Activated CD8-positive, alpha-beta T cell treated with anti-CD3 and anti-CD28 coated beads, Interleukin-2, amount 10 ng/mL, durations not matched to agents 7 days and 5 days (primary cell): ENCODE measurements at regions of chr11 and their contacts with region 1.

Region 1: GRCh38 chr11:124793466-124794278 is 6.5 kb downstream of the MSANTD2 start:
- DNase-seq: peak; percentile 44
- ATAC-seq: peak; percentile 64
- H3K4me3 Mint-ChIP-seq: no peak overlapping the region
- H3K27ac Mint-ChIP-seq: no peak overlapping the region
- H3K4me1 Mint-ChIP-seq: peaks cover 34% of the 10 kb centered on the region
- H3K27me3 Mint-ChIP-seq: no peaks in the 10 kb centered on the region

Region 2: DNA sequence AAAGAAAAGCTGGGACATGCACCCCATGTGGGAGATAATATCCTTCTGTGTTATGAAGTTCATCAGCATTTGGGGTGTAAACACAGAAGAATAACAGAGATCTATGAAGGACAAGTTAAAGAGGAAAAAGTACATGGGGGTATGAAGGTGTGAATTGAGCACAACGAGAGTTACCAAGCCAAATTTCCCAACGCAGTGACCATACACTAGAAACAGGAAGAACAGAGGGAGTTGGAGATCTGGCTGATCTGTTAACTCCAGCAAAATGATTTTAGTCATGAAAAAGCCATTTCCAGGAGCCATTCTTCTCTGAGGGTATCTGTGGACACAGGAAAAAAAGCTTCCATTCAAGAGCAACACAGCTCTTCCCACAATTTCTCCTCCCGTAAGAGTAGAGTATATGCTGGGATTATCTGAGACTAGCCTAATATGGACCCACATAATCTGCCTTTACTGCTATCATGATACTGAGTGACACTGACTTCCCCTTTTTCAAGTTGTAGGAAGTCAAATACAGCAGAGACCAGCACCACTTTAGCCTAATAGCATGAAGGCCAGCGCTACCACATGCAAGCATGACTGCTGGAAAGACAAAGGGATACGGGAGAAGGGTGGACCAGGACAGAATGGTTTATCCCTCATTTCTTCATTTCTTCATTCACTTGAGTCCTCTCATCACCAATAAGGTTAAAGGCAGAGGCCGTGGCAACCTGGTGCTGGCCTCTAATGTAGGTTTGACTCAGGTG is 454.1 kb before region 1 on chr11:
- CTCF ChIA-PET with region 1: no interaction called
- POLR2A ChIA-PET with region 1: no interaction called
- DNase-seq: no peak
- ATAC-seq: no peak
- H3K4me3 Mint-ChIP-seq: no peak overlapping the region
- H3K27ac Mint-ChIP-seq: no peak overlapping the region
- H3K4me1 Mint-ChIP-seq: no peaks in the 10 kb centered on the region
- H3K27me3 Mint-ChIP-seq: no peaks in the 10 kb centered on the region

Region 3: GRCh38 chr11:124746621-124747243 is 46.9 kb before region 1 on chr11:
- CTCF ChIA-PET with region 1: interaction called, 22 read pairs
- POLR2A ChIA-PET with region 1: interaction called, 5 read pairs
- DNase-seq: peak; percentile 81
- ATAC-seq: peak; percentile 92
- H3K4me3 Mint-ChIP-seq: peak overlapping the region; percentile 88
- H3K27ac Mint-ChIP-seq: peak overlapping the region; percentile 84
- H3K4me1 Mint-ChIP-seq: peaks cover 25% of the 10 kb centered on the region
- H3K27me3 Mint-ChIP-seq: peaks cover 22% of the 10 kb centered on the region

Region 4: DNA sequence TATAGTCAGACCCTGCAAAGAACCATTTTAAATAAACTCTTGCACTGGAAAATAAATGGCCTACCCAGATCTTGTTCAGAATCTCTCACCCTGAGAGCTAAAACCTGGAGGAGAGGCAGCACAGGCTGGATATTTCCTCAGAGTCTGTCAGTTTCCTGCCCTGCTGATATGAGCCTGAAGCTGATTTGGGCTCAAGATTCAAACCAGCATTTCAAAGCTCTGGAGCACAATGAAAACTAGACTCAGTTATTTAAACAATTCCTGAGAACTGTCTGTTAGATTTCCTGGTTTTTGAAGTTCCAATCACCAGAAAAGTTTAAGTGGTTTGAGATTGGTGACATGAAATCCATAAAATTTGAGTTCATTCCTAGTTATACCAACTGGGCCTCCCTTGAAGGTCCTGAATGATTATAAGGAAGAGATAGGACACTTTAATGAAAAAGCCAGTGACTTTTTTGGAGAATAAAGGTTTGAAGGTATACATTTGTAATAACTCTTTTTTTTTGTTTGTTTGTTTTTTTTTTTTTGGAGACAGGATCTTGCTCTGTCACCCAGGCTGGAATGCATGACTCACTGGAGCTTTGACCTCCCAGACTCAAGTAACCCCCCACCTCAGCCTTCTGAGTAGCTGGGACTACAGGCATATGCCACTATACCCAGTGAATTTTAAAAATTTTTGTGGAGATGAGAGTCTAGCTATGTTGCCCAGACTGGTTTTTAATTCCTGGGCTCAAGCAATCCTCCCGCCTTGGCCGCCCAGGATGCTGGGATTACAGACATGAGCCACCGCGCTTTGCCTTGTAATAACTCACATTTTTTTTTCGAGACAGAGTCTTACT is 23.7 kb before region 1 on chr11:
- CTCF ChIA-PET with region 1: interaction called, 18 read pairs
- POLR2A ChIA-PET with region 1: no interaction called
- DNase-seq: no peak
- ATAC-seq: no peak
- H3K4me3 Mint-ChIP-seq: no peak overlapping the region
- H3K27ac Mint-ChIP-seq: no peak overlapping the region
- H3K4me1 Mint-ChIP-seq: no peaks in the 10 kb centered on the region
- H3K27me3 Mint-ChIP-seq: no peaks in the 10 kb centered on the region

Region 5: GRCh38 chr11:124778281-124778680 is 15.4 kb before region 1 on chr11:
- CTCF ChIA-PET with region 1: interaction called, 18 read pairs
- POLR2A ChIA-PET with region 1: no interaction called
- DNase-seq: no peak
- ATAC-seq: no peak
- H3K4me3 Mint-ChIP-seq: no peak overlapping the region
- H3K27ac Mint-ChIP-seq: no peak overlapping the region
- H3K4me1 Mint-ChIP-seq: peaks cover 23% of the 10 kb centered on the region
- H3K27me3 Mint-ChIP-seq: no peaks in the 10 kb centered on the region

Region 6: DNA sequence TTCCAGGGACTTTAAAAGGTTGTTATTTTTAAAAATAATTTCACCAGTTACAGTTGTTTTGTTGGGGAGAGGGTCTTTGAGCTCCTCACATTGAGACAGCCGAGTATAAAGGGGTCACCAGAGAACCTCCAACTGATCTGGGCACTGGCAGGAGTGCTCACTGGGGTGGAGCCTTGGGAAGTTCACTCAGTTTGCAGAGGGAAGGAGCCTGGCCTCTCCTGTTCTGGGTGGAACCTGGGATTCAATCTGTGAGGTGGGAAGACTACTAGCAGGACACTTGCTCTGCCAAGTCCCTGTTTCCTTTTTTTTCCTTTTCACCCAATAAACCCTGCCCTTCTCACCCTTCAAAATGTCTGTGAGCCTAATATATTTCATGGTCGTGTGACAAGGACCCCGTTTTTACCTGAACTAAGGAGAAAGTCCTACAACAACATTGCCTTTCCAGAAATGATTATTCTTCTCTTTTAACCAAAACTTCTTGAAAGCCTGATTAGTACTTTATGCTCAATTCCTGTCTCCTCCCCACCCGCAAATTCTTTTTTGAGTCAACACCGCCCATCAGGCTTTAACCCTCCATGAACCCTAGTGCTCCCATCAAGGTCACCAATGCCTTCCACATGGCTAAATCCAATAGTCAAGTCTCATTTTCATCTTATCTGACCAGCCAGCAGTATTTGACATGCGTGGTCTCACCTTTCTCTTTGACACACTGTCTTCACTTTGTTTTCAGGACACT is 28.5 kb after region 1 on chr11:
- CTCF ChIA-PET with region 1: no interaction called
- POLR2A ChIA-PET with region 1: no interaction called
- DNase-seq: no peak
- ATAC-seq: no peak
- H3K4me3 Mint-ChIP-seq: no peak overlapping the region
- H3K27ac Mint-ChIP-seq: no peak overlapping the region
- H3K4me1 Mint-ChIP-seq: no peaks in the 10 kb centered on the region
- H3K27me3 Mint-ChIP-seq: peaks cover 39% of the 10 kb centered on the region

Region 7: GRCh38 chr11:124855437-124855836 is 61.8 kb after region 1 on chr11:
- CTCF ChIA-PET with region 1: no interaction called
- POLR2A ChIA-PET with region 1: no interaction called
- DNase-seq: no peak
- ATAC-seq: no peak
- H3K4me3 Mint-ChIP-seq: no peak overlapping the region
- H3K27ac Mint-ChIP-seq: no peak overlapping the region
- H3K4me1 Mint-ChIP-seq: no peaks in the 10 kb centered on the region
- H3K27me3 Mint-ChIP-seq: peaks cover 11% of the 10 kb centered on the region